Heart left ventricle (tissue), 16 donors: ENCODE measurements at regions of chr2 and their contacts with region 1.

Region 1: DNA sequence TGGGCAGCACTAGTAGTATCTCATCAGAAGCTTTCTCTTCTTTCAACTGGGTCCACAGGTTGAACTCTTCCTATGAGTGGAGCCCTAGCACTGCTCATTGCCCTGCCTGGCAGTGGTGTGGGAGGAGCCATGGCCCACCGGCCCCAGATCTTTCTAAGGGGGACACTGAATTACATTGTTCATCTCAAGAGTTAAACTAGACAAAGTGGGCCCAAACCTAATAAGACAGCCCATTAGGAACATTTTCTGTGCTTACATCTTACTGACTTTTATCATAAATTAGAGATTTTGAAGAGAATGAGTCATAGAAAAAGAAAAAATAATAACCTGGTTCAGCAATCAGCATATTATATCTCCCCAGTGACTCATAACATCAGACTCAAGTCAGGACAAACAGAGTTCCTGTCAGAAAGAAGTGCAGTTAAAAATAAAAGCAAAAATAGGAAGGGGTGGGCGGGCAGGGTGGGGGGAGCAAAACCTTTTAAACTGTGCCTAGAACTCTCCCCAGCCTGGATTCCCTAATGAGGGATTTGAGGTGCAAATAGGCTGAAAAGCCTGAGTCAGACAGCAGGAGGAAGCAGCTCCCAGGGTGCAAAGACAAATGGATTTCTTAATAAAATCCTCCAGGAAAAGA is 161.6 kb upstream of the TRIB2 start:
- DNase-seq: no peak
- ATAC-seq: peak in 2 of 4 donors; percentile 67 to 69
- H3K4me3 ChIP-seq: no peak overlapping the region
- H3K27ac ChIP-seq: peak overlapping the region in 7 of 12 donors; percentile 14 to 58 (median 28)
- H3K4me1 ChIP-seq: peaks cover 0 to 23% (median 10%) of the 10 kb centered on the region in 12 donors
- H3K27me3 ChIP-seq: no peaks in the 10 kb centered on the region
- CTCF ChIP-seq: peak in 6 of 12 donors; percentile 8 to 41 (median 19)
- POLR2A ChIP-seq: no peak

Region 2: GRCh38 chr2:12320991-12321641 is 234.0 kb before region 1 on chr2:
- intact Hi-C with region 1: no loop called
- DNase-seq: peak in 4 of 5 donors; percentile 25 to 68 (median 48)
- ATAC-seq: peak; percentile 53 to 88 (median 81)
- H3K4me3 ChIP-seq: no peak overlapping the region
- H3K27ac ChIP-seq: peak overlapping the region in 8 of 12 donors; percentile 2 to 41 (median 28)
- H3K4me1 ChIP-seq: peaks cover 0 to 26% (median 5%) of the 10 kb centered on the region in 12 donors
- H3K27me3 ChIP-seq: no peaks in the 10 kb centered on the region
- CTCF ChIP-seq: peak in 2 of 12 donors; percentile 3 to 16
- POLR2A ChIP-seq: no peak

Region 3: DNA sequence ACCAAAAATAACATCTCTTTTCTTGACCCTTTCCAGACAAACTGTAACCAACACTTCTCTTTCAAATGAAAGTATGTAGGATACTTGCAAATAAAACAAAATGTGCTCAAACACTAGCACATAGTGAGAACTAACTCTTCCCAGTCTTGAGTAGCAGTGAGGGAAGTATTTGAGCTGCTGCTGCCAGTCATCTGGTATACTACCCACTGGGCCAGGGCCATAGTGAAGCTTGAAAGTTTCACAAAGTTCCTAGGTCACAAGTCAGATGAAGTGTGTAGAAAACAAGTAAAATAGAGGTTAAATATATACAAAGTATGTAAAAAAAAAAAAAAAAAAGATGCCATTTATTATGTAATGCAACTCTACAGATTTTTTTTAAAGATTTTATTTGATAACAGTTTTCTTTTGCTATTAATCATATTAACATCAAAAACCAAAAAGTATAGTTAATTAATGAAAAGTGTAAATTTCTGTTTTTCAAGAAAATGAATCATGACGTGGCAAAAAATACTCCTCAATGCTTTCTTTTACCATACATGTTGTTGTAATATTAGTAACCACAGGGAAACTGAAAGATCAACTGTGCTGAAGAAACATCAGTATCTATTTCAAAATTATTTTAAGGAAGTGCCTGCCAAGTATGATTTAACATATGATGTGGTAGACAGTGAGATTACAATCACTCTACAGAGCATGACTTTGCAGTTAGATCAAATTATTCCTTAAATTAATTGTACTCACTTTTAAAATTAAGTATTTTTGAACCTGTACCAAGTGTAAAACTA is 140.1 kb after region 1 on chr2:
- intact Hi-C with region 1: loop called in 1 of 10 experiments (anchors 10 kb)
- DNase-seq: no peak
- ATAC-seq: no peak
- H3K4me3 ChIP-seq: no peak overlapping the region
- H3K27ac ChIP-seq: no peak overlapping the region
- H3K4me1 ChIP-seq: no peaks in the 10 kb centered on the region
- H3K27me3 ChIP-seq: no peaks in the 10 kb centered on the region
- CTCF ChIP-seq: no peak
- POLR2A ChIP-seq: no peak